ENCODE measurements at regions of chr6 and their contacts with region 1.

Region 1: GRCh38 chr6:52577022-52577777 is at the start of gene TRAM2:
- DNase-seq: peak; percentile 82 to 89 (median 86)
- H3K4me3 ChIP-seq: peak within 1 kb of the TSS; percentile 68 to 94 (median 84)
- H3K27ac ChIP-seq: peak within 1 kb of the TSS; percentile 91 to 100 (median 98)
- H3K4me1 ChIP-seq: peaks cover 25 to 29% of the 10 kb centered on the region in 2 donors
- H3K27me3 ChIP-seq: no peaks in the 10 kb centered on the region
- CTCF ChIP-seq: peak in 2 of 6 experiments; percentile 5 to 21
- POLR2A ChIP-seq: peak; percentile 77 to 78
- total RNA-seq, gene TRAM2: 8.0 to 17.9 (median 10.7) TPM

Region 2: DNA sequence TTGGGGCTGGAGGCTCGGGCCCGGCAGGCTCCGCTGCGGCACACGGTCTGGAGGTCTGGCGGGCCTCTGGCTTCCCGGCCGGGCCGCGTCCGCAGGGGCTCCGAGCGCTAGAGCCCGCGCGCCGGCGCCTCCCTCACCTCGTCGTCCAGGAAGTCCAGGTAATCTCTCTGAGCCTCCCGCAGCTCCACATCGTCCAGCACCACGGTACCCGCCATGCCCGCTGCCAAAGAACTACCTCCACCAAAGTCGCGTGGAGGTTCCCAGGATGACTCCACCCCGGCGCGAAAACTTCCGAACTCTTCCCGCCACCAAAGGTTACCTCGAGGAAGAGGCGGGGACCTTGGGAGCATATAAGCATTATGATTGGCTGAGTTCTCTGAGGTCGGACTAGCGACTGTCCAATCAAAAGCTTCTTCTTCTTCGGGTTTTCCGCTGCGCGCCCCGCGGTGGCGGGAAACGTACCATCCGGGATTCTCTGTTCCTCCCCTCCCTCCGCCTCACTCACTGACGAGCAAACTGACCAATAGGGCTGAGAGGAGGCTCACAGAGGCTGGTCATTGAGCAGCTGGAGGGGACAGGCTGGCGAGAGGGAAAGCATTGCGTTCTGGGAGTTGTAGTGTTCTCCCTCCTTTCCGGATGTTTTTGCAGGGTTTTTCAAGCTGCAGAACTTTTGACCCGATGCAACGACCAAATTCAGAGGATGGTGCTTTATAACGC is 292.6 kb before region 1 on chr6 and contains the start of gene MCM3:
- intact Hi-C with region 1: no loop called
- DNase-seq: peak; percentile 97 to 100 (median 99)
- H3K4me3 ChIP-seq: peak within 1 kb of the TSS; percentile 21 to 92 (median 61)
- H3K27ac ChIP-seq: peak within 1 kb of the TSS in 3 of 5 donors; percentile 29 to 79 (median 43)
- H3K4me1 ChIP-seq: peaks cover 0 to 8% of the 10 kb centered on the region in 2 donors
- H3K27me3 ChIP-seq: no peaks in the 10 kb centered on the region
- CTCF ChIP-seq: peak in 1 of 6 experiments; percentile 25
- POLR2A ChIP-seq: peak in 1 of 2 donors; percentile 55
- total RNA-seq, gene MCM3: 19.4 to 65.5 (median 25.7) TPM

Region 3: GRCh38 chr6:52503848-52504781 is 73.1 kb before region 1 on chr6:
- intact Hi-C with region 1: loop called in 1 of 2 experiments (anchors 10 kb)
- DNase-seq: peak; percentile 65 to 88 (median 82)
- H3K4me3 ChIP-seq: no peak overlapping the region
- H3K27ac ChIP-seq: peak overlapping the region in 3 of 5 donors; percentile 34 to 67 (median 34)
- H3K4me1 ChIP-seq: peaks cover 5 to 11% of the 10 kb centered on the region in 2 donors
- H3K27me3 ChIP-seq: no peaks in the 10 kb centered on the region
- CTCF ChIP-seq: no peak
- POLR2A ChIP-seq: peak in 1 of 2 donors; percentile 10

Region 4: GRCh38 chr6:52522151-52522626 is 55.0 kb before region 1 on chr6:
- intact Hi-C with region 1: loop called in 1 of 2 experiments (anchors 5 kb)
- DNase-seq: peak in 3 of 7 donors; percentile 42 to 47 (median 44)
- H3K4me3 ChIP-seq: no peak overlapping the region
- H3K27ac ChIP-seq: peak overlapping the region in 3 of 5 donors; percentile 5 to 73 (median 57)
- H3K4me1 ChIP-seq: peaks cover 17 to 29% of the 10 kb centered on the region in 2 donors
- H3K27me3 ChIP-seq: no peaks in the 10 kb centered on the region
- CTCF ChIP-seq: no peak
- POLR2A ChIP-seq: no peak